CD4-positive, alpha-beta memory T cell (primary cell): ENCODE measurements at regions of chr7 and their contacts with region 1.

Region 1: GRCh38 chr7:26090927-26091519 is 61.0 kb upstream of the NFE2L3 start:
- DNase-seq: peak in 4 of 5 donors; percentile 40 to 45 (median 44)
- H3K4me3 ChIP-seq: no peak overlapping the region
- H3K4me3 Mint-ChIP-seq: peak overlapping the region in 2 of 8 donors; percentile 5 to 20
- H3K27ac ChIP-seq: no peak overlapping the region
- H3K27ac Mint-ChIP-seq: peak overlapping the region in 2 of 7 donors; percentile 0
- H3K4me1 ChIP-seq: no peaks in the 10 kb centered on the region
- H3K4me1 Mint-ChIP-seq: peaks cover 4 to 18% (median 12%) of the 10 kb centered on the region in 4 donors
- H3K27me3 ChIP-seq: no peaks in the 10 kb centered on the region
- H3K27me3 Mint-ChIP-seq: no peaks in the 10 kb centered on the region

Region 2: DNA sequence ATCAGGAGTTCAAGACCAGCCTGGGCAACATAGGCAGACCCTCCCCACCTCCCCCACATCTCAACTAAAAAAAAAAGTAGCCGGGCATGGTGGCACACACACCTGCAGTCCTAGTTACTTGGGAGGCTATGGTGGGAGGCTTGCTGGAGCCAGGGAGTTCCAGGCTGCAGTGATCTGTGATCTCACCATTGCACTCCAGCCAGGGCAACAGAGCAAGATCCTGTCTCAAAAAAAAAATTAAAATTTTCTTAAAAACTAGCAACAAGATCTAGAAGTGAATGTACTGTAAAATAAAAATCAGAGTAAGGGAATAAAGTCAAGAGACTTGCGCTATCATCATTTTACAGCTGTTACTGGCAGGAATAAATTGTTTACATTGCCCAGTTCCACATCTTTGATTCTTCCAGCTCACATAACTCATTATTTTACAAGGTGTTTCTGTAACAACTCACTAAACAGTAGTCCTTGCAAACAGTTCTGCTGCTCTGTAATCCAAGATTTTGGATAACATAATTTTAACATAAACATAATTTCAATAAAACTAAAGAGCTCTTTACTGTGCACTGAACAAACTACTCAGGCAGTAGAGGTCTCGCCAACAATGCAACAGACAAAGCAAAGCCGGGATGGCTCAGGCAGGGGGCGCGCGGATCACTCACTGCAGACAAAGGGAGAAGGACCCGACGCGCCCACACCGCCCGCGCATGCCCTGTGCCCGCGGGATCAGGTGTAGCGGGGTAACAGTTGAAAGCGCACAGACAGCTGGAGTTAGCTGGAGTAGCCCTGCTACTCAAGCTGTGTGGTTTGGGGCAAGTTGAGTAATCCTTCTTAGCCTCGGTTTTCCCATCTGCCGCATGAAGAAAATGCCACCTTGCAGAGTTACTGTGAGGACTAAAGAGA is 12.3 kb before region 1 on chr7:
- CTCF ChIA-PET with region 1: interaction called, 82 read pairs
- POLR2A ChIA-PET with region 1: no interaction called
- intact Hi-C with region 1: no loop called
- DNase-seq: peak; percentile 73 to 82 (median 75)
- H3K4me3 ChIP-seq: no peak overlapping the region
- H3K4me3 Mint-ChIP-seq: peak overlapping the region in 5 of 8 donors; percentile 21 to 65 (median 46)
- H3K27ac ChIP-seq: no peak overlapping the region
- H3K27ac Mint-ChIP-seq: no peak overlapping the region
- H3K4me1 ChIP-seq: peaks cover 8% of the 10 kb centered on the region
- H3K4me1 Mint-ChIP-seq: peaks cover 0 to 10% (median under 1%) of the 10 kb centered on the region in 4 donors
- H3K27me3 ChIP-seq: peaks cover 15% of the 10 kb centered on the region
- H3K27me3 Mint-ChIP-seq: peaks cover 20 to 46% of the 10 kb centered on the region in 2 donors

Region 3: DNA sequence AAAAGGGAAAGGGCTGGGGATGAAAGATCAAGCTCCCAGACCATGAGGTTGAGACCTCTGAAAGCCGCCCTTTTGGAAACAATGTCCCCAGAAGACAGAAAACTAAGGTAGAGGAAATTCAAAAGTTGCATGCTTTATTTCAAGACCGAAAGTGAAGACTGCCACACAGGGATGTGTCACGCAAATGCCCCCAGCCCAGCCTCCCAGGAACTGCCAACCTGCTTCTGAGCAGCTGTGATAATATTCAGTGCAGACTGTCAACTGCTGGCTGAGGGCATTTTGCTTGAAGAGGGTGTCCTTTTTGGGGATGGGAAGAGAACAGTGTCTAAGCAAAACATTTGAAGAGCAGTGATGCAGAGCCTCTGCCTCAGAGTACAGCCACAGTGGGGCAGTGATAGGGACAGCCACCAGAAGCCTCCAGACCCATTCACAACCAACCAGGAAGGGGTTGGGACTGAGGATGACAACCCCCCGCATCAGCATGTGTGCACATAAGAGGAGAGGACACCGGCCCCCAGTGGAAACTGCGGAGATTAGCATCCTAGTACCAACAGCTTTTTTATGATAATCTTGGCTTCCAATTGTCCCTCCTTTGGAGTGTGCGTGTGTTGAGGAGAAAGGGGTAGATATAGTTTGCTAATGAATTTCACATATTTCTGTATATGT is 26.3 kb after region 1 on chr7:
- CTCF ChIA-PET with region 1: interaction called, 116 read pairs
- POLR2A ChIA-PET with region 1: interaction called, 3 read pairs
- intact Hi-C with region 1: loop called (anchors 1 kb)
- DNase-seq: no peak
- H3K4me3 ChIP-seq: no peak overlapping the region
- H3K4me3 Mint-ChIP-seq: no peak overlapping the region
- H3K27ac ChIP-seq: no peak overlapping the region
- H3K27ac Mint-ChIP-seq: no peak overlapping the region
- H3K4me1 ChIP-seq: peaks cover 7% of the 10 kb centered on the region
- H3K4me1 Mint-ChIP-seq: peaks cover 0 to 5% (median 2%) of the 10 kb centered on the region in 4 donors
- H3K27me3 ChIP-seq: no peaks in the 10 kb centered on the region
- H3K27me3 Mint-ChIP-seq: peaks cover 2 to 3% of the 10 kb centered on the region in 2 donors

Region 4: GRCh38 chr7:26193432-26194207 is 102.6 kb after region 1 on chr7:
- CTCF ChIA-PET with region 1: interaction called, 212 read pairs
- POLR2A ChIA-PET with region 1: interaction called, 69 read pairs
- intact Hi-C with region 1: loop called (anchors 1 kb)
- DNase-seq: no peak
- H3K4me3 ChIP-seq: no peak overlapping the region
- H3K4me3 Mint-ChIP-seq: peak overlapping the region; percentile 38 to 100 (median 79)
- H3K27ac ChIP-seq: peak overlapping the region; percentile 36
- H3K27ac Mint-ChIP-seq: peak overlapping the region; percentile 38 to 99 (median 89)
- H3K4me1 ChIP-seq: peaks cover 90% of the 10 kb centered on the region
- H3K4me1 Mint-ChIP-seq: peaks cover 64 to 93% (median 75%) of the 10 kb centered on the region in 4 donors
- H3K27me3 ChIP-seq: no peaks in the 10 kb centered on the region
- H3K27me3 Mint-ChIP-seq: no peaks in the 10 kb centered on the region

Region 5: DNA sequence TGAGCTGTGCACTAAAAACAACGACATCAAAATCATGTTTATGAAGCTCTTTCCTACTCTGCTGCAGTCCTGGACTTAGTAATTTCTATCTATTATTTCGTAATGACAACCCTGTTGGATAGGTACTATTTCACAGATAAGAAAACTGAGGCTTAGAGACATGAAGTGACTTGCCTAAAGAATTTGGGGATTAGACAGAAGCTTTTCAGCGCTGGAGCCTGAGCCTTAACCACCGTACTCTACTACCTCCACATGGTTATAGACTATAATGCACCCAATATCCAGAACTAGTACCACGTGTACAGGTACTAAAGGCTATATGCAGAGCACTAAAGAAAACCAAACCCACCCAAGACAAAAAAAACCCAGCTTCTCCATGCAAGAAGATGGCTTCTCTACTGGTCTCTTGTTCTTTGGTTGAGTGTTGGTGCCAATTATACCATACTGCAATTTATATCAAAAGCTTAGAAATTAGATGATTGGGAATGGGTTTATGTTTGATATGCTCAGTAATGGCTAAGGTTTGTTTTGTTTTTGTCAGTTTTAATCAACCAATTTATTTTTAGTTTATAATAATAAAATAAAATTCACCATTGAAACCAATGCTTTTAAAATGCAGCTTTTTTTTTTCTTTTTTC is 194.1 kb after region 1 on chr7:
- CTCF ChIA-PET with region 1: interaction called, 19 read pairs
- POLR2A ChIA-PET with region 1: interaction called, 3 read pairs
- intact Hi-C with region 1: loop called (anchors 1 kb)
- DNase-seq: peak in 2 of 5 donors; percentile 14 to 24
- H3K4me3 ChIP-seq: no peak overlapping the region
- H3K4me3 Mint-ChIP-seq: no peak overlapping the region
- H3K27ac ChIP-seq: no peak overlapping the region
- H3K27ac Mint-ChIP-seq: no peak overlapping the region
- H3K4me1 ChIP-seq: no peaks in the 10 kb centered on the region
- H3K4me1 Mint-ChIP-seq: peaks cover 2 to 6% (median 4%) of the 10 kb centered on the region in 4 donors
- H3K27me3 ChIP-seq: no peaks in the 10 kb centered on the region
- H3K27me3 Mint-ChIP-seq: no peaks in the 10 kb centered on the region

Region 6: GRCh38 chr7:26376175-26376917 is 285.3 kb after region 1 on chr7:
- CTCF ChIA-PET with region 1: interaction called, 11 read pairs
- POLR2A ChIA-PET with region 1: no interaction called
- intact Hi-C with region 1: no loop called
- DNase-seq: peak; percentile 22 to 43 (median 24)
- H3K4me3 ChIP-seq: peak overlapping the region; percentile 26 to 56
- H3K4me3 Mint-ChIP-seq: peak overlapping the region; percentile 83 to 95 (median 88)
- H3K27ac ChIP-seq: no peak overlapping the region
- H3K27ac Mint-ChIP-seq: peak overlapping the region in 2 of 7 donors; percentile 24 to 75
- H3K4me1 ChIP-seq: peaks cover 8% of the 10 kb centered on the region
- H3K4me1 Mint-ChIP-seq: peaks cover 0 to 7% (median 5%) of the 10 kb centered on the region in 4 donors
- H3K27me3 ChIP-seq: peaks cover 11% of the 10 kb centered on the region
- H3K27me3 Mint-ChIP-seq: peaks cover 13 to 23% of the 10 kb centered on the region in 2 donors

Region 7: DNA sequence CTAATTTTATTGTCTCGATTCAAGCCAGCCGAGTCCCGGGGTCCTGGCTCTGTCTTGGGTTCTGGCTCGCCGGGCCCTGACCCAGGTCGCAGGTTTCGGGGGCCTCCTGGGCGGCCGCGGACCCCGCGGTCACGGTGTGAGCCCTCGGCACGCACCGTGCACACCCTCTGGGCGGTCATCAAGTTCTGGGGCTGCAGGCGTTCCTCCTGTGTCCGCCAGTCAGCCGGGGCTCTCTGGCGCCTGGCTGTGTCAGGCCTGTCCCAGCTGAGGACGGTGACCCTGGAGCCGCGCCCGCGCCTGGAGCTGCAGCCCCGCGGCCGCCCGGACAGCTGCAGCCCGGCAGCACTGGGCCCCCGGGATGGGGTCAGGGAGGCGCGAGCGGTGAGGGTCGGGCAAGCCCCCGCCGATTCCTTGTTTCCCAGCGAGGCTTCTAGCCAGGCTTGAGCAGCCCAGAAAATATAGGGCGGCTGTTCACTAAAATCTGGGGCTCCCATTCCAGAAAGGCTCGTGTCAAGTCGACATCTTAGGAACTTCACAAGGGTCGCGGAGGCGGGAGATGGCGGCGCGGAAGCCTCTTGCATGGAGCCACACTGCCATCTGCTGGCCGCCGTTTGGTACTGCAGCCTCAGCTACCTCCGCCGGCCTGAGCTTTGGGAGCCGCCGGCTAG is 1069.7 kb after region 1 on chr7:
- CTCF ChIA-PET with region 1: interaction called, 5 read pairs
- POLR2A ChIA-PET with region 1: no interaction called
- intact Hi-C with region 1: loop called (anchors 10 kb)
- DNase-seq: peak; percentile 77 to 84 (median 78)
- H3K4me3 ChIP-seq: peak overlapping the region; percentile 61 to 79
- H3K4me3 Mint-ChIP-seq: peak overlapping the region; percentile 77 to 87 (median 81)
- H3K27ac ChIP-seq: no peak overlapping the region
- H3K27ac Mint-ChIP-seq: peak overlapping the region in 1 of 7 donors; percentile 88
- H3K4me1 ChIP-seq: peaks cover 38% of the 10 kb centered on the region
- H3K4me1 Mint-ChIP-seq: peaks cover 18 to 52% (median 30%) of the 10 kb centered on the region in 4 donors
- H3K27me3 ChIP-seq: peaks cover 80% of the 10 kb centered on the region
- H3K27me3 Mint-ChIP-seq: peaks cover 51 to 68% of the 10 kb centered on the region in 2 donors